Activated CD4-positive, alpha-beta memory T cell treated with anti-CD3 and anti-CD28 coated beads for 36 hours (primary cell): ENCODE measurements at regions of chr10 and their contacts with region 1.

Region 1: DNA sequence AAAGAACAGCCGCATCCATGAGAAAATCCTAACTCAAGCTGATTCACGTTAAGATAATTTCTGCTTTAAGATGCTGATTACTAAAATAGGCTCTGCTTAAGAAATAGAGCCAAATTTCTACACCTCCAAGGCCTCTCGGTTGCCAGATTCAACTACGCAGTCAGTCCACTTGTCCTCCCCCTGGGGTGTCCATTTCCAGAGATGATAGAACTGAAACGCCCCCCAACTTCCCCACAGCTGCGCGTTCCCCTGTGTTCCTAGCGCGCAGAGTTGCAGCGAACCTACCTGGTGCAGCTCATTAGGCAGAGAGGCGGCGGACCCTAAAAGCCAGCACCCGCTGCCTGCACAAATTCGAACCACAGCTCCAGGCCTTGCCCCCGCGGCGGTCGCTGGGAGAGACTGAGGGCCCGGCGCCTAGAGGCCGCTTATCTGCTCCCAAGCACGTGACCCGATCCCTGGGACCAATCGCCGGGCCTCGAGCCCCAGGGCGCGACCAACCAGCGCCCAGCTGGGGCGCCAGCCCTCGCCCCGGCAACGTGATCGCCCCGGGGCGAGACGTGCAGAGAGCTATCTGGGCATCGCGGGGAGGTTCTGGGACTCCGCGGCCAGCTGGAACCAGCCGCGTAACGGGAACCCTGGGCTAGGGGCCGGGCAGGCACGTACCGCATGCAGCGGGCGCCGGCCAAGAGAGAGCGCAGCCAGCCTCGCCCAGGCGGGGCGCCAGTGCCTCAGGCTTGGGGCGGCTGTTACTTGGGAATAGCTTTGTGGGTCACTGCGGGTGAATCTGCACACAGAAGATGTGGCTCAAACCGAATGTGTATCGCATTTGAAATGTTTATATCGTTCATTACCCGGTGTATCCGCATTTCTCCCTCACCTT is at the start of gene PPP1R3C:
- DNase-seq: peak; percentile 70
- H3K4me3 Mint-ChIP-seq: peak within 1 kb of the TSS; percentile 43
- H3K27ac Mint-ChIP-seq: no peak within 1 kb of the TSS
- H3K4me1 Mint-ChIP-seq: peaks cover 6% of the 10 kb centered on the region
- H3K27me3 Mint-ChIP-seq: peaks cover 47% of the 10 kb centered on the region
- total RNA-seq, gene PPP1R3C: 0.07 TPM in 1 of 2 experiments, not detected in the other

Region 2: GRCh38 chr10:90912174-90912573 is 720.7 kb before region 1 on chr10:
- CTCF ChIA-PET with region 1: interaction called, 3 read pairs
- POLR2A ChIA-PET with region 1: no interaction called
- intact Hi-C with region 1: loop called (anchors 1 kb)
- DNase-seq: no peak
- H3K4me3 Mint-ChIP-seq: no peak overlapping the region
- H3K27ac Mint-ChIP-seq: no peak overlapping the region
- H3K4me1 Mint-ChIP-seq: peaks cover 2% of the 10 kb centered on the region
- H3K27me3 Mint-ChIP-seq: no peaks in the 10 kb centered on the region

Region 3: DNA sequence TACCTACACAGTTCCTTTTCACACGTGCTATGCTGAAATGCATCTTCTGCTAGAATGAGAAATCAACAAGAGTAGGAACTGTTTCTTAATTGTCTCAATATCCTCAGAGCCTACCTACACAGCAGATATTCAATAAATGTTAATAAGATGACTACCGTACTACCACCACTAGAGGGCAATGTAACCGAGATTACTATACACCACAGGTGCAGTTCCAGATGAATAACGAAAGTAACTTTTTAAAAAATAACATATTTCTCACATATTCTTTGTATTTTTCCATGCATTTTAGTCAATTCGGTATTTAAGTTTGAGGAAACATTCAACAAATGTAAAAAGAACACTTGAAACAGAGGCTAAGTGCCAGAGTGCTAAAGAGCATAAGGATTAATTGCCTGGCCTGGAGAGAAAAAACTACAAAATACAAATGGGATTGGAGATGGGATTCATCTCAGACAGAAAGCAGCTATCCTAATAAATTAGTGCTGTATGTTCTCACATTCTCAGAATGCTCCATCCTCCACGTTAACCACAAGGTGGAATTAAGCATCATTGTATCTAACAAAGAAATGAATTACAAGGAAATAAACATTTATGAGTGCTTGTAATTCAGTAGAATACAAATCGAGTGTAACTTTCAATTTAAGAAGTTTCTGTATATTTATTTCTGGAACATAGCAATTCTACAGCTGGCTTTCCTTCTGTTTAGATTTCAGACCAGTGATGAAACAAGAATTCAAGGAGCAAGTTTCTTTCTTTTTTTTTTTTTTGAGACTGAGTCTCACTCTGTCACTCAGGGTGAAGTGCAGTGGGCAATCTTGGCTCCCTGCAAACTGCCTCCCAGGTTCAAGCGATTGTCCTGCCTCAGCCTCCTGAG is 243.0 kb before region 1 on chr10:
- CTCF ChIA-PET with region 1: interaction called, 41 read pairs
- POLR2A ChIA-PET with region 1: no interaction called
- intact Hi-C with region 1: loop called (anchors 1 kb)
- DNase-seq: no peak
- H3K4me3 Mint-ChIP-seq: no peak overlapping the region
- H3K27ac Mint-ChIP-seq: no peak overlapping the region
- H3K4me1 Mint-ChIP-seq: peaks cover 4% of the 10 kb centered on the region
- H3K27me3 Mint-ChIP-seq: peaks cover 17% of the 10 kb centered on the region

Region 4: GRCh38 chr10:91493313-91493712 is 139.6 kb before region 1 on chr10:
- CTCF ChIA-PET with region 1: interaction called, 9 read pairs
- POLR2A ChIA-PET with region 1: no interaction called
- intact Hi-C with region 1: loop called (anchors 1 kb)
- DNase-seq: no peak
- H3K4me3 Mint-ChIP-seq: no peak overlapping the region
- H3K27ac Mint-ChIP-seq: no peak overlapping the region
- H3K4me1 Mint-ChIP-seq: no peaks in the 10 kb centered on the region
- H3K27me3 Mint-ChIP-seq: no peaks in the 10 kb centered on the region

Region 5: DNA sequence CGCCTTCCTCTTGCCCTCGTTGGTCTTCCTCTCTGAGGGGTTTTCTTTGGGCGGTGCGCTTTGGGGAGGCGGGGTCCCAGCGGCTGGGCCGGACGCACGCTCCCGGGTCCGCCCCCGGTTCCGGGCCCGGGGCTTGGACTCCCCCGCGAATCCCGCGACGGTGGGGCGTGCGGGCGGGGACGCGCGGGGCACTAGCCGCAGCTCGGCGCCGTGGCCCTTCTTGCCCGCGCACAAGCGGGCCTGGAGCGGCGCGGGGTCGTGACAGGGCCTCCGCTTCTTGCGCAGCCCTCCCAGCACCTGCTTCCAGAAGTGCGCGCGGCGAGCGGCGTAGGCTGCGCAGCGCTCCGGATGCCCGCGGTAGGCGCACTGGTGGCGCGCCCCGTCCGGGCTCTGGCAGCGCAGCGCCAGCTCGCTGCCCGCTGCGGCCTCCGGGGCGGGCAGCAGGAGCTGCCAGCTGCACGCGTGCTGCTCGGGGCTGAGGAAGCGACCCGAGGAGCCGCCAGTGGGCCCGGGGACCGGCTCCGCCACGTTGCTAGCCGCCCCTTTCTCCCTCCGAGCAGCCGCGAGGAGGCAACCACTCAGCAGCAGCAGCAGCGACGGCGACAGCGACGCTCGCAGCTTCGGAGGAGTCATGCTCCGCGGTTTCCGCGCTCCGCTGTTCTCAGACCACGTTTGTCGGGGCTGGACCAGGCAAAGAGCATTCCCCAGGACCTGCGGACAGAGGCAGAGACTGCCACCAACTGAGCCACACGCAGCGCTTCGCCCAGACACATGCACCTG is 275.6 kb after region 1 on chr10:
- CTCF ChIA-PET with region 1: interaction called, 3 read pairs
- POLR2A ChIA-PET with region 1: no interaction called
- intact Hi-C with region 1: loop called (anchors 2 kb)
- DNase-seq: peak; percentile 82
- H3K4me3 Mint-ChIP-seq: peak overlapping the region; percentile 91
- H3K27ac Mint-ChIP-seq: peak overlapping the region; percentile 75
- H3K4me1 Mint-ChIP-seq: peaks cover 16% of the 10 kb centered on the region
- H3K27me3 Mint-ChIP-seq: peaks cover 5% of the 10 kb centered on the region